ENCODE measurements at regions of chr11 and their contacts with region 1.

Region 1: DNA sequence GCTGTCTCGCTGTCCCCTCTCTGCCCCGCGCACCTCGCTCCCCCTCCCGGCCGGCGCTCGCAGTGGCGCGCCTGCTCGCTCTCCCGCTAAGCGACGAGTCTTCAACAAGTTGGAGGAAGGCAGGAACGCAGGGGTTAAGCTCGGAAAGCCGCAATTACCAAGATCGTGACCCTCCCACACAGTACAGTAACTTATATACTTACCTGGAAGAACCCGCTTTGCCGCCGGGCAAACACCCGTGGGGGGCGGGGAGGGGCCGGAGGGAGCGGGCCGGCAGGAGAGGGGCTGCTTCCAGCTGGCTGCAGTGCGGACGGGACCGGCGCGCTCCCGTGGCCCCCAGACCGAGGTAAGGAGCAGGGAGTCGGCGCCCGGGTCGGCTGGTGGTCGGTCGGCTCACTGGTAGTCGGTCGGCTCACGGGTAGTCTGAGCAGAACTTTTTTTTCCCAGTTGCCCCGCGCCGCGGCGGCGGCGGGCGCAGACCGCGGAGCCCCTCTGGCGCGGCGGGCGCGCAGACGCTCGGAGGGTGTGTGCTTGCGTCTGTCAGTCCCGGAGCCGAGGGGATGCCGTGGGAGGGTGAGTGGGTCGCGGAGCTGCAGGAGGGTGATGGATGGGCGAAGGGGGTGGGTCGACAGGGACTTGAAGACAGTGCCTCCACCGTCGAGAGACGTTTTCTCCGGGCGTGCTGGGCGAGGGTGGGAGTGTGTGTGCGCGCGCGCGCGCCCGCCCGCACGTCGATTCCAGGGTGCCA is 101.2 kb upstream of the HSD17B12 start:
- DNase-seq: peak; percentile 42
- ATAC-seq: peak; percentile 60
- H3K4me3 ChIP-seq: peak overlapping the region; percentile 44
- H3K27ac ChIP-seq: no peak overlapping the region
- H3K4me1 ChIP-seq: no peaks in the 10 kb centered on the region
- H3K27me3 ChIP-seq: peaks cover 85% of the 10 kb centered on the region
- CTCF ChIP-seq: peak; percentile 33; the same call in 1 of the 2 replicates
- POLR2A ChIP-seq: no peak
- RAD21 ChIP-seq: no peak

Region 2: GRCh38 chr11:43738590-43739409 is 159.5 kb after region 1 on chr11:
- CTCF ChIA-PET with region 1: no interaction called
- POLR2A ChIA-PET with region 1: no interaction called
- dilution Hi-C with region 1: no loop called
- in situ Hi-C with region 1: no loop called
- intact Hi-C with region 1: loop called (anchors 5 kb)
- DNase-seq: peak; percentile 90
- ATAC-seq: peak; percentile 90
- H3K4me3 ChIP-seq: no peak overlapping the region
- H3K27ac ChIP-seq: peak overlapping the region; percentile 45; the same call in 1 of the 2 replicates
- H3K4me1 ChIP-seq: peaks cover 11% of the 10 kb centered on the region
- H3K27me3 ChIP-seq: no peaks in the 10 kb centered on the region
- CTCF ChIP-seq: no peak
- POLR2A ChIP-seq: no peak
- RAD21 ChIP-seq: no peak

Region 3: GRCh38 chr11:43810929-43811596 is 231.7 kb after region 1 on chr11:
- CTCF ChIA-PET with region 1: no interaction called
- POLR2A ChIA-PET with region 1: no interaction called
- dilution Hi-C with region 1: no loop called
- in situ Hi-C with region 1: no loop called
- intact Hi-C with region 1: no loop called
- DNase-seq: no peak
- ATAC-seq: no peak
- H3K4me3 ChIP-seq: no peak overlapping the region
- H3K27ac ChIP-seq: no peak overlapping the region
- H3K4me1 ChIP-seq: no peaks in the 10 kb centered on the region
- H3K27me3 ChIP-seq: no peaks in the 10 kb centered on the region
- CTCF ChIP-seq: peak; percentile 42
- POLR2A ChIP-seq: no peak
- RAD21 ChIP-seq: peak; percentile 52

Region 4: GRCh38 chr11:43845816-43846215 is 266.5 kb after region 1 on chr11:
- CTCF ChIA-PET with region 1: no interaction called
- POLR2A ChIA-PET with region 1: no interaction called
- dilution Hi-C with region 1: no loop called
- in situ Hi-C with region 1: loop called (anchors 10 kb)
- intact Hi-C with region 1: no loop called
- DNase-seq: no peak
- ATAC-seq: no peak
- H3K4me3 ChIP-seq: no peak overlapping the region
- H3K27ac ChIP-seq: no peak overlapping the region
- H3K4me1 ChIP-seq: no peaks in the 10 kb centered on the region
- H3K27me3 ChIP-seq: no peaks in the 10 kb centered on the region
- CTCF ChIP-seq: no peak
- POLR2A ChIP-seq: no peak
- RAD21 ChIP-seq: no peak